PC-3 (cell line): ENCODE measurements at regions of chrX and their contacts with region 1.

Region 1: DNA sequence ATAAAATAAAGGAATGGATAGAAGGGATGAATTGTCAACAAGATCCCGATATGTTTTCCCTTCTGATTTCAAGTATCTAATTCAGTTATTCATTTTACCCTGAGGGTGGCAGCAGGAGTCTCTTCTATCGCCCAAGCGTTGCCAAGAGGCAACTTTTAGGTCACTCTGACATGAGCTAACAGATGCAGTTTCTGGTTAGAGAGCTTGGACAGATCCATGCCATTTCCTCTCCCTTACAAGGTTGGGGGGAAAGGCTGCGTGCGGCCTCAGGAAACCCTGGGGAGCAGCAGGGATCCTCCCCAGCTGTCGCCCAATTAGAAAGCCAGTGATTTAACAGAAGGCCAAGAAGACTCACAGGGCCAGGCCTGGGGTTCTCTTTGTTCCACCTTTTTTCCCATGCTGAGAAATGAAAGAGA is 35.3 kb upstream of the WAS start:
- DNase-seq: peak; percentile 59
- ATAC-seq: peak; percentile 76
- H3K4me3 ChIP-seq: no peak overlapping the region
- H3K27ac ChIP-seq: no peak overlapping the region
- H3K4me1 ChIP-seq: peaks cover 12% of the 10 kb centered on the region
- H3K27me3 ChIP-seq: no peaks in the 10 kb centered on the region
- CTCF ChIP-seq: peak; percentile 51

Region 2: DNA sequence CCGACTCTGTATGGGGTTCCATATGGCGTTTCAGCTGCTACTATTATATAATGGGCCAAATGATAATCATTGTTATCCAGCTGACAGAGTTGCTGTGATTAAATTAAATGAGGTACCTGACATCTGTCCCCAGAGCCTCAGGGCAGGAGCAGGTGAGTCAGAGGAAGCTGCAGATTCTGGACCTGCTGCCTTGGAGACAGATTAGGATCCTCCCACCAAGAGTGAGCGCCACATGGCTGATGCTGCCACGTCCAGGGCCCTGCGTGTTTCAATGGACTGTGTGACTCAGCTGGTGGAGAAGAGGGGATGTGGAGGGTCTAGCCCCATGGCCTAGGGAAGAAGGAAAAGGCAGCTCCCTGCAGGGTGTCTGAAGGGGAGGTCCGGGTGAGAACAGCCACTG is 961.1 kb before region 1 on chrX:
- CTCF ChIA-PET with region 1: interaction called, 10 read pairs
- POLR2A ChIA-PET with region 1: no interaction called
- intact Hi-C with region 1: no loop called
- DNase-seq: peak; percentile 72
- ATAC-seq: peak; percentile 86
- H3K4me3 ChIP-seq: no peak overlapping the region
- H3K27ac ChIP-seq: no peak overlapping the region
- H3K4me1 ChIP-seq: peaks cover 9% of the 10 kb centered on the region
- H3K27me3 ChIP-seq: no peaks in the 10 kb centered on the region
- CTCF ChIP-seq: no peak

Region 3: GRCh38 chrX:48696301-48697181 is 48.2 kb after region 1 on chrX and contains the start of gene SUV39H1:
- CTCF ChIA-PET with region 1: no interaction called
- POLR2A ChIA-PET with region 1: no interaction called
- intact Hi-C with region 1: loop called (anchors 1 kb)
- DNase-seq: peak; percentile 91
- ATAC-seq: peak; percentile 96
- H3K4me3 ChIP-seq: peak within 1 kb of the TSS; percentile 78
- H3K27ac ChIP-seq: peak within 1 kb of the TSS; percentile 64
- H3K4me1 ChIP-seq: peaks cover 12% of the 10 kb centered on the region
- H3K27me3 ChIP-seq: no peaks in the 10 kb centered on the region
- CTCF ChIP-seq: no peak
- total RNA-seq, gene SUV39H1: 22.3 and 31.7 TPM in 2 replicates

Region 4: GRCh38 chrX:48945516-48946348 is 297.4 kb after region 1 on chrX:
- CTCF ChIA-PET with region 1: no interaction called
- POLR2A ChIA-PET with region 1: no interaction called
- intact Hi-C with region 1: loop called (anchors 5 kb)
- DNase-seq: peak; percentile 53
- ATAC-seq: peak; percentile 94
- H3K4me3 ChIP-seq: no peak overlapping the region
- H3K27ac ChIP-seq: no peak overlapping the region
- H3K4me1 ChIP-seq: no peaks in the 10 kb centered on the region
- H3K27me3 ChIP-seq: no peaks in the 10 kb centered on the region
- CTCF ChIP-seq: peak; percentile 84